ENCODE measurements at regions of chr19 and their contacts with region 1.

Region 1: GRCh38 chr19:771332-771785 is 20.4 kb downstream of the MISP start:
- DNase-seq: no peak
- ATAC-seq: no peak
- H3K4me3 ChIP-seq: no peak overlapping the region
- H3K27ac ChIP-seq: no peak overlapping the region
- H3K4me1 ChIP-seq: no peaks in the 10 kb centered on the region
- H3K27me3 ChIP-seq: no peaks in the 10 kb centered on the region

Region 2: GRCh38 chr19:756232-756631 is 15.1 kb before region 1 on chr19:
- intact Hi-C with region 1: no loop called
- DNase-seq: no peak
- ATAC-seq: no peak
- H3K4me3 ChIP-seq: no peak overlapping the region
- H3K27ac ChIP-seq: no peak overlapping the region
- H3K4me1 ChIP-seq: no peaks in the 10 kb centered on the region
- H3K27me3 ChIP-seq: no peaks in the 10 kb centered on the region

Region 3: GRCh38 chr19:917323-918151 is 146.2 kb after region 1 on chr19 and contains the start of gene KISS1R:
- intact Hi-C with region 1: loop called (anchors 2 to 5 kb)
- DNase-seq: peak in 1 of 2 donors; percentile 82
- ATAC-seq: no peak
- H3K4me3 ChIP-seq: no peak within 1 kb of the TSS
- H3K27ac ChIP-seq: no peak within 1 kb of the TSS
- H3K4me1 ChIP-seq: no peaks in the 10 kb centered on the region
- H3K27me3 ChIP-seq: no peaks in the 10 kb centered on the region
- total RNA-seq, gene KISS1R: not detected

Region 4: DNA sequence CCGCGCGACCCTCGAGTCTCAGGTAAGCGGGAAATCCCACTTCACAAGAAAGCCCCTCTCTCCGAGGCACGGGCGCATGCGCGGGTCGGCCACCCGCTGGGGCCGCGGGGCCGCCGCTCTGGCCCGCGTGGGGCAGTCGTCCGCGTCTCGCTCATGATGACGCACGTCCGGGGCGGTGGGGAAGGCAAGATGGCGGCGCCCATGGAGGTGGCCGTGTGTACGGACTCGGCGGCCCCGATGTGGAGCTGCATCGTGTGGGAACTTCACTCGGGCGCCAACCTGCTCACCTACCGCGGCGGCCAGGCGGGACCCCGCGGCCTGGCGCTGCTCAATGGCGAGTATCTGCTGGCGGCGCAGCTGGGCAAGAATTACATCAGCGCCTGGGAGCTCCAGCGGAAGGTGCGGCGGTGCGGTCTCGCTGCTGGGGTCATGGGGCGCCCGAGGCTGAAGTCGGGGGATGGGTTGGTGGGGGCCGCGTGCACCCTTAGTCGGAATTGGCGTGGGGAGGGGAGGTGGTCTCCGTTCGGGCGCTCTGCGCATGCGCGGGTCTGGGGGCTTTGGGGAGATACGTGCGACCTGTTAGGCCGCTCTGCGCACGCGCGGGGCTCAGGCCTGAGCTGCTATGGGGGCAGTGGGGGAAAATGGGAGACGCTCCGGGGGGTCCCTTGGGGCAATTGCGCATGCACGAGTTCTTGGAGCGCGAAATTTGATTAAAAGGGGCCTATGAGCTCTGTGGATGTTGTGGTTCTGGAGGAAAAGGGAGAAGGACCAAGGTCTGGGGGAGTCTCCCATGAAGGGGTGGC is 213.0 kb after region 1 on chr19 and contains the start of gene WDR18:
- intact Hi-C with region 1: loop called (anchors 2 to 10 kb)
- DNase-seq: peak; percentile 96 to 99
- ATAC-seq: peak; percentile 95
- H3K4me3 ChIP-seq: peak within 1 kb of the TSS; percentile 44 to 80
- H3K27ac ChIP-seq: peak within 1 kb of the TSS in 1 of 2 donors; percentile 79
- H3K4me1 ChIP-seq: no peaks in the 10 kb centered on the region
- H3K27me3 ChIP-seq: no peaks in the 10 kb centered on the region
- total RNA-seq, gene WDR18: 15.5 to 16.1 TPM

Region 5: GRCh38 chr19:1241417-1242095 is 470.2 kb after region 1 on chr19 and contains the start of gene ATP5F1D:
- intact Hi-C with region 1: no loop called
- DNase-seq: peak; percentile 97 to 99
- ATAC-seq: peak; percentile 75
- H3K4me3 ChIP-seq: peak within 1 kb of the TSS; percentile 56 to 82
- H3K27ac ChIP-seq: peak within 1 kb of the TSS in 1 of 2 donors; percentile 82
- H3K4me1 ChIP-seq: no peaks in the 10 kb centered on the region
- H3K27me3 ChIP-seq: no peaks in the 10 kb centered on the region
- total RNA-seq, gene ATP5F1D: 92.8 to 102 TPM